ENCODE measurements at regions of chr17 and their contacts with region 1.

Region 1: DNA sequence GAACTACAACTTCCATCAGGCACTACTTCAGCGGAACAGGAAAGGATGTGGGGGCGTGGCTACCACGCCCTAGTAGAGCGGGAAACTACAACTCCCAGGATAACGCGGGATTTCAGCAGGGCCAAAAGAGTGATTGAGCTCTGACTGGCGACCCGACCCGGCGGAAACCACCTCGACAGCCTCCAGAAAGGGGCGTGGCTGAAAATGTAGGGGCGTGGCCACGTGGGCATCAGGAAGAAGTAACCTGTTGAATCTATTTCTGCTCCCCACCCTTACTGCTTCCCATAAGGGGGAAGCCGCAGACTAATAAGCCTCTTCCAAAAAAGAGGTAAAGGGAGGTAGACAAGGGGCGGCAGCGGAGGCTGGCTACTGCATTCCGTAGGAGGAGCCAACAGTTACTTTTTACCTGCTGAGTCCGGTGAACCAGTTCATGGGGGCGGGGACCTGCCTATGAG is at the start of gene TMEM102:
- DNase-seq: peak; percentile 95
- ATAC-seq: peak; percentile 87
- H3K4me3 Mint-ChIP-seq: peak within 1 kb of the TSS; percentile 94
- H3K27ac Mint-ChIP-seq: peak within 1 kb of the TSS; percentile 93
- H3K4me1 Mint-ChIP-seq: peaks cover 45% of the 10 kb centered on the region
- H3K27me3 Mint-ChIP-seq: peaks cover 15% of the 10 kb centered on the region
- CTCF ChIP-seq: no peak
- total RNA-seq, gene TMEM102: 13.4 and 14.8 TPM in 2 replicates

Region 2: GRCh38 chr17:7214300-7215135 is 220.7 kb before region 1 on chr17:
- CTCF ChIA-PET with region 1: no interaction called
- POLR2A ChIA-PET with region 1: interaction called, 3 read pairs
- intact Hi-C with region 1: loop called (anchors 5 kb)
- DNase-seq: peak; percentile 98
- ATAC-seq: peak; percentile 86
- H3K4me3 Mint-ChIP-seq: peak overlapping the region; percentile 88
- H3K27ac Mint-ChIP-seq: peak overlapping the region; percentile 94
- H3K4me1 Mint-ChIP-seq: peaks cover 53% of the 10 kb centered on the region
- H3K27me3 Mint-ChIP-seq: no peaks in the 10 kb centered on the region
- CTCF ChIP-seq: no peak

Region 3: DNA sequence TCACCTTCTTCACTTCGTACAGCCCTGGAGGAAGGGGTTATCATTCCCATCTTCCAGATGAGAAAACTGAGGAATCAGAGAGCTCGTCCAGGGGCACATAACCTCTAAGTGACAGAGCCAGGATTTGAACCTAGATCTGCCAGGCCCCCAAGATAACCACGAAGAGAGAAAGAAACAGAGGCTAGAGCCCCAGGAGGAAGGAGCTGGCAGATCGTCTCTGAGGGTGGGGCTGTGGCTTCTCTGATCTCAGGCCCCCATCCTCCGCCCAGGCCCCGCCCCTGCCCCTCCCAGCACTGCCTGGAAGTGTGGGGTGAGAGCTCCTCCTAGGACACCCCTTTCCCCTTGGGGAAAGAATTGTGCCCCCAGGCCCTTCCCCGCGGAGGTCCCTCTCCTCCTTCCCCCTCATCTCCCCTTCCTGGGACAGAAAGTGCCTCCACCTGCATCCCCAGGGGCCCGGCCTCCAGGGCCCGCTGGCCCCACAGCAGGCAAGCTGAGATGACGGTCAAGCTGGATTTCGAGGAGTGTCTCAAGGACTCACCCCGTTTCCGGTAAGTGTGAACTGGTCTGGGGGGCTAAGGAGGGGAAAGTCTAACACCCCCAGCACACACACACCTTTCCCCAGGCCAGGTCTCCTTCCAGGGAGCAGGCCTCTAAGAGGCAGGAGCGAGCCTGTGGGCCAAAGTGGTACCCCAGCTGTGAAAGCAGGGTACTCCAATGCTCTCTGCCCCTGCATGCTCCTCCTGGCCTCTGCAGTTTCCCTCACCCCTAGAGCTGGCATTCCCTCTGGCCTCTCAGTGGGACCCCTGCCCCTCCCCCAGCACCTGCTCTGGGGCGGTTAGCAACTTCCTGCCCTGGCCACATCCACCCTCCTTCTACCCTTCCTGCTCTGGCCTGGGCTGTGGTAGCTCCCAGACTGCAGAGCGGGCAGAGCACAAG is 98.7 kb before region 1 on chr17 and contains the start of gene ACAP1:
- CTCF ChIA-PET with region 1: no interaction called
- POLR2A ChIA-PET with region 1: interaction called, 13 read pairs
- intact Hi-C with region 1: no loop called
- DNase-seq: peak; percentile 67
- ATAC-seq: peak; percentile 96
- H3K4me3 Mint-ChIP-seq: peak within 1 kb of the TSS; percentile 85
- H3K27ac Mint-ChIP-seq: peak within 1 kb of the TSS; percentile 98
- H3K4me1 Mint-ChIP-seq: peaks cover 49% of the 10 kb centered on the region
- H3K27me3 Mint-ChIP-seq: no peaks in the 10 kb centered on the region
- CTCF ChIP-seq: no peak
- total RNA-seq, gene ACAP1: 298 and 328 TPM in 2 replicates

Region 4: DNA sequence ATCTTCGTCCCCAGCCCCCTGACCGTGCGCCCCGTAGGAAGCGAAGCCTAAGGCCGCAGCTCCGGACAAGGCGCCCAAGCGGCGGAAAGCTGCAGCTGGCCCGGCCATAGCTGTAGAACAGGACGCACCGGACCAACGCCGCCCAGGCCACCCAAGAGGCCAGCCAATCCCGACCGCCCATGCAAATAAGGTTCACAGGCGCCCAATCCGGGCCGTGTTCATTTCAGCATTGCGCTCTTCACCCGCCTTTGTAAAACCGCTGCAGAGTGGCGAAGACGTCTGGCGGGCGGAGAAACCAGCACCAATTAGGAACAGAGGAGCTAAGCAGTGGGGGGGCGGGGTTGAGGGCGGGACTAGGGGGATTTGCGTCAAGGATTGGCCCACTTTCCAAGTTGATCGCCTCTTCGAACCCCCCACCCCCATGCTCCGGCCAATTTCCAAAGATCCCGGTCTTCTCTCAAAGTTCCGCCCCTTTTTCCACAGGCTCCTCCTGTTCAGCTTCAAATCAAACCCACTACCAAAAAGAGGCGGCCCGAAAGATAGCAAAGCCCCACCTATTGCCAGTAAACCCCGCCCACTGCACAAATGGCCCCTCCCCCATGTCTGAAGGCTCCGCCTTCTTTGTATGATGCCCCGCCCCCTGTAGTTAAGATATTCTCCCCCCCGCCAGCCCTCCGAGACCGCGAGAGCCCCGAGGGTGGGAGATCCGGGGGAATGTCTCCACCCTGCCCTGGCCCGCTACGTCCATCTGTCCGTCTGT is 31.1 kb before region 1 on chr17 and contains the start of gene TMEM256:
- CTCF ChIA-PET with region 1: interaction called, 9 read pairs
- POLR2A ChIA-PET with region 1: interaction called, 29 read pairs
- intact Hi-C with region 1: loop called (anchors 1 kb)
- DNase-seq: peak; percentile 82
- ATAC-seq: peak; percentile 89
- H3K4me3 Mint-ChIP-seq: peak within 1 kb of the TSS; percentile 97
- H3K27ac Mint-ChIP-seq: peak within 1 kb of the TSS; percentile 94
- H3K4me1 Mint-ChIP-seq: peaks cover 16% of the 10 kb centered on the region
- H3K27me3 Mint-ChIP-seq: peaks cover 12% of the 10 kb centered on the region
- CTCF ChIP-seq: no peak
- total RNA-seq, gene TMEM256: 98.2 and 117 TPM in 2 replicates

Region 5: GRCh38 chr17:7572588-7573323 is 137.5 kb after region 1 on chr17:
- CTCF ChIA-PET with region 1: no interaction called
- POLR2A ChIA-PET with region 1: interaction called, 4 read pairs
- intact Hi-C with region 1: loop called (anchors 1 kb)
- DNase-seq: peak; percentile 100
- ATAC-seq: no peak
- H3K4me3 Mint-ChIP-seq: peak overlapping the region; percentile 98
- H3K27ac Mint-ChIP-seq: peak overlapping the region; percentile 99
- H3K4me1 Mint-ChIP-seq: peaks cover 48% of the 10 kb centered on the region
- H3K27me3 Mint-ChIP-seq: no peaks in the 10 kb centered on the region
- CTCF ChIP-seq: no peak

Region 6: GRCh38 chr17:7632492-7632894 is 197.2 kb after region 1 on chr17:
- CTCF ChIA-PET with region 1: no interaction called
- POLR2A ChIA-PET with region 1: no interaction called
- intact Hi-C with region 1: no loop called
- DNase-seq: no peak
- ATAC-seq: peak; percentile 22
- H3K4me3 Mint-ChIP-seq: no peak overlapping the region
- H3K27ac Mint-ChIP-seq: no peak overlapping the region
- H3K4me1 Mint-ChIP-seq: peaks cover 3% of the 10 kb centered on the region
- H3K27me3 Mint-ChIP-seq: no peaks in the 10 kb centered on the region
- CTCF ChIP-seq: no peak